Head of caudate nucleus (tissue), 42 donors: ENCODE measurements at regions of chr16 and their contacts with region 1.

Region 1: GRCh38 chr16:31032736-31033708 is at the start of gene STX4:
- DNase-seq: peak; percentile 95 to 100 (median 98)

Region 2: DNA sequence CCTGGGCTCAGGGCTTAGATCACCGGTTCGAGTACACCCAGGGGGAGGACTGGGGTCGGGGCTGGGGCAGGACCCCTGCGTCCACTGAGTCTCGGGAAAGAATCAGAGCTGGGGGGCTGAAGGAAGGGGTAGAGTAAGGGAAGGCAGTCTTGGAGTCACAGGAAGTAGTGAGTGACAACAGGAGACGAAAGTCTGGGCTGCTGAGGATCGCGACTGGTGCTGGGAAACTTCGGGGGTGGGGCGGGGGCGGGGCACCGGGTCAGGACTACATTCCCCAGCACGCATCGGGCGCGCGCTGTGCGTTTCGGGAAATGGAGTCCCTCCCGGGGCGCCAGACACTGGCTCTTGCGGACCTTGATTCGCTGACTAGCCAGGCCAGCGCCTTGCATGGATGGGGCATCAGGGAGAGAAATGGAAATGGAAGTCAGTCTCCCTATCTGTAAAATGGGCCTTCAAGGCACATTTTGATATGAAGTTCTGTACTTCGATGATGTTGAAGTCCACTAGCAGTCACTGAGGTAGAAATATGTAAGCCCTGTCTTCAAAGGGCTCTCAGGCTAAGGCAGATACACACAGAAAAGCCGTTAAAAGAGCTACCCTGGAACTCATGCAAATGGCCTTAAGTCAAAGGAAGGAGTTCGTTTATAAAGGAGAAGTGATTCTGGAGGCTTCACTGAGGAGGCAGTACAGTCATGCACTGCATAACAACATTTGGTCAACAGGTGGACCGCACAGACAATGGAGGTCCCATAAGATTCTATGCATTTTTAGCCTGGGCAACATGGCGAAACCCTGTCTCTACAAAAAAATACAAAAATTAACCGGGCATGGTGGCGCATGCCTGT is 135.9 kb before region 1 on chr16:
- intact Hi-C with region 1: no loop called
- DNase-seq: peak; percentile 87 to 97 (median 92)

Region 3: DNA sequence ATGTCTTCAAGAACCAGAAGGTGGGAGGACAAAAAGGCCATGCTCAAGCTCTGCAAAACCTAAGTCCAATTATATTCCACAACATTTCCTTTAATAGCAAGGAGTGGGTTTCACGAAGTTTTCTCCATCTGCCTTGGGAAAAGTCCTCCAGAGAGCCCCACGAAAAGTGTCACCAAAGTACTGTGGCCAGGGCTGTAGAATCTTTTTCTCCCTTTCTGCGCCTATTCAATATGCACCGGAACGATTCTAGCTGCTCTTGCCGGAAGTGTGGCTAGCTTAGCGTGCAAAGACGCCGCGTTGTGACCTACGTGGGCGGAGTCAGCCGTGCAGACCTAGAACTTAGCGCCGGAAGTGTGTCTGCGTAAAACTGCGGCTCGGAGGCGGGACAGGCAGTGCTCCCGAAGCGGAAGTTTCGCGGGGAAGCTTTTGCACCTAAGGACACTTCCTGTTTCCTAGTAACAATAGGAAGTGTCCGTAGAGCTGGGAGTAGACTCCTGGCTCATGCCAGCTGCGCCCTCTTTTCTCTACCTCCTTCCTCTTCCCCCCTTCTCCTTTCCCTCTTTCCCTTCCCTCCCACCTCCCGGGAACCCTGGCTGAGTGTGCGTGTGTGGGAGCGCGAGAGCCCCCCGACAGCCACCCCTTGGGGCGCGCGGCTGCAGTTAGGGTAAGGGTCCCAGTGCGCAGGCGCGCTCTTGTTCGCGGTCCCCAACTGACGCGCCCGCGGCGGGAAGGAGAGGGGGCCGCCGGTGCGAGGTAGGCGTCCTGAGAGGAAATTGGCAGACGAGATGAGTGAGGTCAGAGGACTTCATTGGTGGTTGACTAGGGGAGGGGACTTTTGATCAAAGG is 41.2 kb after region 1 on chr16 and contains the starts of genes ZNF646 and ZNF668:
- intact Hi-C with region 1: loop called (anchors 5 kb)
- DNase-seq: peak; percentile 97 to 100 (median 99)